ENCODE measurements at regions of chr15 and their contacts with region 1.

Region 1: GRCh38 chr15:65384895-65385858 is 7.4 kb upstream of the IGDCC3 start:
- DNase-seq: peak; percentile 93
- H3K4me3 ChIP-seq: peak overlapping the region; percentile 17 to 50; a peak in 2 of 4 replicates
- H3K27ac ChIP-seq: no peak overlapping the region
- H3K4me1 ChIP-seq: peaks cover 0 to 24% of the 10 kb centered on the region in 2 experiments; a peak in 1 of 4 replicates
- H3K27me3 ChIP-seq: peaks cover 3% of the 10 kb centered on the region; the same call in 1 of the 2 replicates
- CTCF ChIP-seq: peak; percentile 83
- EP300 ChIP-seq: no peak
- RAD21 ChIP-seq: peak; percentile 99

Region 2: DNA sequence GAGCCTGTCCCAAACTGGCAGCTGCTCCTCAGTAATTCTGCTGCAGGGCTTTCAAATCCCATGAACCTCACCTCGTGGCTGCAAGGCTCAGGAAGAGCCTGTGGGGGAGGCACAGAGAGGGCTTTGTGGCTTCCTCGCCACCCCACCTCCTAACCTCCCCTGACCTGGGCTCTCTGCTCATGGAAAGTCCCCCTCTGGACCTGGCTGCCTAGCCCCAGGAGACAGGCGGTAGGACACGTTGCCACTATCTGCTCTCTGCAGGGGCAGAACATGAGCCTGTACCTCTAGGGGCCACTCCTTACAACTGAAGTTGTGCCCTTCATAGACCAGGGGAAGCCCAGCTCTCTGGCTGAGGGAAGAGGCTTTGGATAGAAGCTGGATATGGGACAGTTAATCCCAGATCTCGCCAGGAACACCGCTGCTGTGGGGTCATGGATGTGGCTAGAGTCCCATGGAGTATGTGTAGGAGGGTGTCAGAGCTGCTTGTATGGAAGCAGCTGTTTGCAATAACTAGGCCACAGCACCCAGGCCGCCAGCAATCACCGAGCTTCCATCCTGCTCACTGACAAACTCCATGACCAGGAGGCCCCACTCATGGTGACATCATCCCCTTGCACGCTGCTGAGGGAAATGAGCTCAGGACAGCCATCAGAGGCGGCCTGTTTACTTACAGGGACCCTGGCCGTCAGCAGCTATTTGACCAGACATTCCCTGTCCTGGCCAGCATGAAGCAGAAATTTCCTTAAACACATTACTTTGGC is 139.9 kb before region 1 on chr15:
- CTCF ChIA-PET with region 1: no interaction called
- POLR2A ChIA-PET with region 1: no interaction called
- DNase-seq: no peak
- H3K4me3 ChIP-seq: no peak overlapping the region
- H3K27ac ChIP-seq: no peak overlapping the region
- H3K4me1 ChIP-seq: no peaks in the 10 kb centered on the region; a peak in 1 of 4 replicates
- H3K27me3 ChIP-seq: no peaks in the 10 kb centered on the region
- CTCF ChIP-seq: no peak
- EP300 ChIP-seq: no peak
- RAD21 ChIP-seq: no peak

Region 3: GRCh38 chr15:65264863-65265430 is 120.2 kb before region 1 on chr15:
- CTCF ChIA-PET with region 1: no interaction called
- POLR2A ChIA-PET with region 1: no interaction called
- DNase-seq: no peak
- H3K4me3 ChIP-seq: no peak overlapping the region
- H3K27ac ChIP-seq: no peak overlapping the region
- H3K4me1 ChIP-seq: no peaks in the 10 kb centered on the region; a peak in 1 of 4 replicates
- H3K27me3 ChIP-seq: no peaks in the 10 kb centered on the region
- CTCF ChIP-seq: no peak
- EP300 ChIP-seq: no peak
- RAD21 ChIP-seq: no peak

Region 4: DNA sequence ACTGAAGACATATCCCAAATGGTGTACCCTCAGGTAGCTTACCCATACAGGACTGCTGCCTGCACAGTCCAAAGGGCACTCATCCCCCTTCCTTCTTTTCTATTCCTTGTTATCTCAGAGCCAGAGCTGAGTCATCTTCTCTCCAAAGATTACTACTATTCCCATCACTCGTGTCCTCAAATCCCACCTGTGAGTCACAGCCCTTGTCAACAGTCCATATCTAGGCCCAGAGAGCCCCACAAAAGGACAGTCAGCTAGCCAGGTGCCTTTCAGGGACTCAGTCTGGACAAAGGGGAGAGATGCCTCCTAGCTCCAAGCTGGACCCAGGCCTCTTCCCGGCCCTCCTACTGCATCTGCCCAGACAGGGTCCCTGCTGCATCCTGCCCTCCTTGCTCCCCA is 109.5 kb before region 1 on chr15:
- CTCF ChIA-PET with region 1: no interaction called
- POLR2A ChIA-PET with region 1: no interaction called
- DNase-seq: no peak
- H3K4me3 ChIP-seq: no peak overlapping the region
- H3K27ac ChIP-seq: no peak overlapping the region
- H3K4me1 ChIP-seq: peaks cover 0 to 6% of the 10 kb centered on the region in 2 experiments; a peak in 1 of 4 replicates
- H3K27me3 ChIP-seq: no peaks in the 10 kb centered on the region
- CTCF ChIP-seq: no peak
- EP300 ChIP-seq: no peak
- RAD21 ChIP-seq: no peak

Region 5: DNA sequence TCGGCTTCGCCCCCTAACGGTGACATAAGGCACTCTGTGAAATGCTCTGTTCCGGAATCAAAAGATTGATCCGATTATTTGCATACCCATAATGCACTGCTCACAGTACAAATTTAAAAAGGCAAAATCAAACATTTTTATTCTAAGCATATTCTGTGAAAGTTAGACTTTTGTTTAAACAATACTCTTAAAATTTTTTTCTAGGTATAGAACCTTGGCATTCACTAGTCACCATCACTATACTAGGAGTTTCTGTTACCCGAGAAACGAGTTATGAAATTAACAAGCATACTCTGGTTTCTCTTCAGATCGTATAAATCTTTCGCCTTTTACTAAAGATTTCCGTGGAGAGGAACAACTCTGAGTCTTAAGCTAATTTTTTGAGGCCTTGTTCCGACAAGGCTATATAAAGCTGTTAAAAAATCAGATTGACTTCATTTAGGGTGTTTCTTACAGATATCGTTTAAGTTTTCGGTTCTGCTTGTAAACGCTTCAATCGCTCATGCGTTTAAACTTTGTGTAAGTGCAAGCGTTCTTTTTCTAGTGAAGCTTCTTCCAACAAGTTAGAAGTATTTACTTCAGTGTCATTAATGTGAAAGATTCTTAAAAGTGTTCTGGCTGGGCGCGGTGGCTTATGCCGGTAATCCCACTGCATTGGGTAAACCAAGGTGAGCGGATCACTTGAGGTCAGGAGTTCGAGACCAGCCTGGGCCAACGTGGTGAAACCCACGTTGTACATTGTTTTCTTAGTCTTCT is 80.6 kb before region 1 on chr15 and contains the start of gene RNU5B-1:
- CTCF ChIA-PET with region 1: interaction called, 18 read pairs
- POLR2A ChIA-PET with region 1: interaction called, 8 read pairs
- DNase-seq: peak; percentile 81
- H3K4me3 ChIP-seq: peak within 1 kb of the TSS; percentile 44 to 56
- H3K27ac ChIP-seq: peak within 1 kb of the TSS; percentile 89 to 95
- H3K4me1 ChIP-seq: peaks cover 8 to 10% of the 10 kb centered on the region in 2 experiments; a peak in 2 of 4 replicates
- H3K27me3 ChIP-seq: no peaks in the 10 kb centered on the region
- CTCF ChIP-seq: peak; percentile 87
- EP300 ChIP-seq: peak; percentile 27 to 81; a peak in 3 of 4 replicates
- RAD21 ChIP-seq: no peak; the same call in 1 of the 2 replicates
- polyA plus RNA-seq, gene RNU5B-1: not detected in 2 replicates

Region 6: DNA sequence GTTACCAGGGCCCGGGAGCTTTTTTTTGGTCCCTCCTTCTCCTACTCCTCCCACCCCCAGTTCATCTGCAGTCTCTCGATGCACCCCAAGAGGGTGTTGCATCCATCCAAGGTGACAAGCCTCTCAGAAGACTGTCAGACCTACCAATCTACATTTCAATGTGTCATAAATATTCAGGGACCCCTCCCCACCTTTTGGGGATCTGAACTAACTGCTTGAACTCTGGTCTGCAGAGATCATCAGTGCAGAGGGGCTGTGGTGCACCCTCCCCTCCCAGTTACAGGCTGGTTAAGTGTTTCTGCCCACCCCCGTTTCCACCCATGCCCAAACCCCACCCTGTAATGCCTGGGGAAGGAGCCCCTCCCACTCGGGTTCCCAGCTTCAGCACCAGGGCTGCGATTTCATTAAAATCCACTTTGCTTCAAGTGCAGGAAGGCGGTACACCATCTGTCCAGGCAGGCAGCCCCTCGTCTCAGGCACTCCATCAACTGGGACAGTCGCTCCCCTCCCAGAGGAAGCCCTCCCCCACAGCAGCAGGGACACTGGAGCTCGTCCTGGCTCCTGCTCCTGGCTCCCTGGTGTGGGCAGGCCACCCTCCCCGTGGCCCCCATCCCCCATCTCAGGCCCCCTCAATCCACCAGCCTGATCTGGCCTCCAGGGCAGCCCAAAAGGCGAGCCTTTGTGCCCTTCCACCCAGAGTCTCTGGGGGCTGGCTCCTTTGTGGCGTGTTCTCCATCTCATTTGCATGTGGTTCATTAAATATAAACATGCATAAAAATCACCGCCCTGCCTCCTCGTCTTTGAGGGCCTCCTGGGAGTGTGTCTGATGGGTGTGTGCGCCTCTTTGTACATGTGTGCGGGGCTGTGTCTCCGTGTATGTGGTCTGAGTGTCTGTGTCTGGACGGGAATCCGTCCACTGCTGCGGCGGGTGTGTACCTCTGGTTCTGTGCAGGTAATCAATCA is 48.4 kb before region 1 on chr15:
- CTCF ChIA-PET with region 1: interaction called, 969 read pairs
- POLR2A ChIA-PET with region 1: interaction called, 4 read pairs
- DNase-seq: peak; percentile 57
- H3K4me3 ChIP-seq: no peak overlapping the region
- H3K27ac ChIP-seq: no peak overlapping the region
- H3K4me1 ChIP-seq: peaks cover 0 to 44% of the 10 kb centered on the region in 2 experiments; a peak in 1 of 4 replicates
- H3K27me3 ChIP-seq: no peaks in the 10 kb centered on the region
- CTCF ChIP-seq: no peak
- EP300 ChIP-seq: no peak
- RAD21 ChIP-seq: no peak

Region 7: DNA sequence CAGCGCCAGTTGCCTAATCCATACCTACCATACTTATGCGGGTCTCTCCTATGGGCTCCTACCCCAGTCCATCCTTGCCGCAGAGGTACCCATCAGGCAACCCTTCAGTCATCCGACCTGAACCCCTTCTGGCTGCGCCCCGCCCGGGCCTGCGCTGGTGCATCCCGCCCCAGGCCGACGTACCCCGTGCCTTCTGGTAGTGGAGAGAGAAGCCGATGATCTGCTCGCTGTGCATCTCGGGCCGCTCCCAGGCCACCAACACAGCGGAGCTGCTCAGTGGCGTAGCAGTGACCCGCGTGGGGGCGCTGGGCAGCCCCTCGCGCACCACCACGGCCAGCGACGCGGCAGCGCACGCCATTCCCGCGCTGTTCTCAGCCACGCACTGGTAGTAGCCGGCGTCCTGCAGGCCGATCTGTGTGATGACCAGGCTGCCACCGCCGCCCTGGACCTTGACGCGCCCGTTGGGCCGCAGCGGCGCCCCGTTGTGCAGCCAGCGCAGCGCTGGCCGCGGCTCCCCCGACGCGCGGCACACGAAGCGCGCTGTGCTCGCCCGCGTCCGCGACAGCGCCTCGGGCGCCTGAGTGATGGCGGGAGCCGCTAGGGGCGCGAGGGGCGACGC is 10.5 kb after region 1 on chr15:
- CTCF ChIA-PET with region 1: interaction called, 61 read pairs
- POLR2A ChIA-PET with region 1: no interaction called
- DNase-seq: peak; percentile 80
- H3K4me3 ChIP-seq: peak overlapping the region in 1 of 2 experiments; percentile 31; a peak in 2 of 4 replicates
- H3K27ac ChIP-seq: no peak overlapping the region
- H3K4me1 ChIP-seq: peaks cover 0 to 6% of the 10 kb centered on the region in 2 experiments; a peak in 1 of 4 replicates
- H3K27me3 ChIP-seq: peaks cover 29% of the 10 kb centered on the region
- CTCF ChIP-seq: peak; percentile 9; the same call in 1 of the 2 replicates
- EP300 ChIP-seq: no peak
- RAD21 ChIP-seq: no peak

Region 8: DNA sequence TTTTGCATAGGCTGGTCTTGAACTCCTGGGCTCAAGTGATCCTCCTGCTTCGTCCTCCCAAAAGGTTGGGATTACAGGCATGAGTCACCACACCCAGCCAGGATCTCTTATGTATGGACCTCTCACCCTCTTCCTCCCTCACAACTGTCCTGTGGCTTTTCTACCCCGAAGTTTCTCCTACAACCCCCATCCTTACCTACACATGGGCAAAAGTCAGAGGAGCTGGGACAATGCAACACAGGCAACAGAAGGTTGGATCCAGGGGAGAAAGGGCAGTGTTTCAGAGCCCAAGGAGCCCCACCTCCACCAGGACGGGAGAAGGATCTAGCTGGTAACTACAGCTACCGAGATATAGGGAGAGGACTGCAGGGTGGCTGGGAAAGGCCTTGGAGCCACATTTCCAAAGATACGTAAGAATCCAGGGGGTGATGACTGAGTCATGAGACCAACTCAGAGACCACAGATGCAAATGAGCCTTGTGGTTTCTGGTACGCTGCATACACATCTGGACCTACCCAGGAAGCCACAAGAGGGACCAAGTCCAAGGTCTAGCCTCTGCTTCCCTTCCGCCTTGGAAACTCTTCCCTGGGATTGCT is 24.0 kb after region 1 on chr15:
- CTCF ChIA-PET with region 1: interaction called, 15 read pairs
- POLR2A ChIA-PET with region 1: no interaction called
- DNase-seq: no peak
- H3K4me3 ChIP-seq: no peak overlapping the region
- H3K27ac ChIP-seq: peak overlapping the region in 1 of 2 experiments; percentile 41; a peak in 1 of 4 replicates
- H3K4me1 ChIP-seq: peaks cover 0 to 12% of the 10 kb centered on the region in 2 experiments; a peak in 1 of 4 replicates
- H3K27me3 ChIP-seq: no peaks in the 10 kb centered on the region; the same call in 1 of the 2 replicates
- CTCF ChIP-seq: no peak
- EP300 ChIP-seq: no peak
- RAD21 ChIP-seq: no peak